MCF 10A (cell line): ENCODE measurements at regions of chr5 and their contacts with region 1.

Region 1: GRCh38 chr5:136062366-136063274 is 33.8 kb downstream of the TGFBI start:
- DNase-seq: peak; percentile 79
- H3K4me3 Mint-ChIP-seq: no peak overlapping the region
- H3K27ac Mint-ChIP-seq: no peak overlapping the region
- H3K4me1 Mint-ChIP-seq: peaks cover 27% of the 10 kb centered on the region
- H3K27me3 Mint-ChIP-seq: no peaks in the 10 kb centered on the region
- CTCF ChIP-seq: peak; percentile 80

Region 2: DNA sequence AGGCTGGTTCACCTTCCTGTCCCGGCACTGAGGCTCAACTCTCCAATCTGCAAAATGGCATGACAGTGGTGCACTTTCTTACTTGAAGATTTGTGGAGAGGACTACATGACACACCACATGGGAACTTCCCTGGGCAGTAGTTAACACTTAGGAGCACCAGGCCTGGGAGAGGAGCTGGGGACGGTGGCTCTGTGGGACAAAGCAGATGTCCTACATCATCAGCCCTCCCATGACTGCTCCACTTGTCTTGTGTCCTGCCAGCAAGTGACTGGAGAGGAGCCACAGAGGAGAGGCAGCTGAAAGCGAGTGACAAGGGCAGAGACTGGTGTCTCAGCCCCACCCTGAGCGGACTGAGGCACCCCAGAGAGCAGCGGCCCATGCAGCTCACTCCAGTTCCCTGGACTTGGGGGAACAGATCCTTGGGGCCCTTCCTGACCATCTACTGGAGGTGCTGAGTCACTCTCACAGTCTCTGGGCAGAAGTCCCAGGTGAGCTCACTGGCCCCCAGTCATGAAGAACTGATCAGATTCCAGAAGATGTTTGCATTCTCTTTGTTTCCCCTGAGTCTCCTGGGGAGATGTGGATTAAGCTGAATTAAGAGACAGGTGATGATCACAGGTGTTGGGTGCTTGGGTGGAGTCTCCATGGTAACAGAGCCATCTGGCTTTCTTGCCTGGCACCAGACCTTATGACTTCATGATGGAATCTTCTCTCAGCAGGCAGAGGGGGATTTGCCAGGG is 241.4 kb before region 1 on chr5:
- CTCF ChIA-PET with region 1: no interaction called
- POLR2A ChIA-PET with region 1: no interaction called
- intact Hi-C with region 1: no loop called
- DNase-seq: peak; percentile 49
- H3K4me3 Mint-ChIP-seq: no peak overlapping the region
- H3K27ac Mint-ChIP-seq: no peak overlapping the region
- H3K4me1 Mint-ChIP-seq: no peaks in the 10 kb centered on the region
- H3K27me3 Mint-ChIP-seq: peaks cover 16% of the 10 kb centered on the region
- CTCF ChIP-seq: no peak

Region 3: DNA sequence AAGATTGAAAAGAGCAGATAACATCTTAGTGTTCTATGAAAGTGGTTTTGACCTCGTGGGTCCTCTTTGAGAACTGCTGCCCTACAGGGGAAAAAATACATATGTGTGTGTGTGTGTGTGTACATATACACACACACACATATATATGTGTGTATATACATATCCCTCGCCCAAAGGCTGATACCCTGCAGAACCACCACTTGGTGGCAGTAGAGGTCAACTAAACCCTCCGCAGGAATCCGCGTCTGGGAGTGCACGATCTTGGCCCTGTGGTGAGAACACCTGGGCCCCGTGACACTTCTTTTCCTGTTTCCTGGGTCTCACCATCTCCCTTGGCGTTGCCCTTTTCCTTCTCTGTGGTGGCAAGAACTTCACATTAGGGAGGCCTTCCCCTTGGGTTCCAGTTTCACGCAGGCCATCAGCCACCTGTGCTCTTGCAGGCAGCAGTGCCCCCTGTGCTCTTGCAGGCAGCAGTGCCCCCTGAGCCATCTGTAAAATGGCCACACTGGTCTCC is 175.2 kb before region 1 on chr5:
- CTCF ChIA-PET with region 1: interaction called, 45 read pairs
- POLR2A ChIA-PET with region 1: interaction called, 5 read pairs
- intact Hi-C with region 1: loop called (anchors 1 kb)
- DNase-seq: peak; percentile 90
- H3K4me3 Mint-ChIP-seq: no peak overlapping the region
- H3K27ac Mint-ChIP-seq: no peak overlapping the region
- H3K4me1 Mint-ChIP-seq: no peaks in the 10 kb centered on the region
- H3K27me3 Mint-ChIP-seq: peaks cover 37% of the 10 kb centered on the region
- CTCF ChIP-seq: peak; percentile 96

Region 4: DNA sequence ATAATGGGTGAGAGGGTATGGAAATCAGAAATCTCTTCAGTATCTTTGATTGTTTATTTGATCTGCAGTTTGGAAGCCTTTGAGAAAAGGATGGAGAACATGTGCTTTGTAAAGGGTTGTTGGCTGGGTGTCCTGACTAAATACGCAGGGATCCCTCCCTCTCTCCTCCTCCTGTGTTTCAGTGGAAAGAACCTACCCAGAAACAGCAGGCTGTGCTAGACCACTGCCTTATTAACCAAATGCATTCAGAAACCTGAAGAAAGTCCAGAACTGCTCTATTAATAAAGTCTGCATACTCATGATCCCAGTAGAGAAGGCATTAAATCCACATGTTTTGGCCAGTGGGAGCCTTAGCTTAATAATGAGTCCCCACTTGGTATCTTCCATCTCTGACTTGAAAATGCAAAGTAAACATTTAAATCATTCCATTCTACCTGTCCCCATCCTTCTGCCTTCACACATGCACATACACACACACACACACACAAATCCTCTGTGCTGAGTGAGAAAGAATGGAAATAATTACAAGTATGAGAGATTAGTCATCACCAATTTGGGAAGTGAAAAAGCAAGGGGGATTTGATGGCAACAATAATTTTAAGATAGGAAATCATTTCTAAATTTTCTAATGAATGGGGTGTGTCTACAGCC is 97.8 kb before region 1 on chr5:
- CTCF ChIA-PET with region 1: interaction called, 4 read pairs
- POLR2A ChIA-PET with region 1: interaction called, 3 read pairs
- intact Hi-C with region 1: loop called (anchors 1 kb)
- DNase-seq: no peak
- H3K4me3 Mint-ChIP-seq: no peak overlapping the region
- H3K27ac Mint-ChIP-seq: no peak overlapping the region
- H3K4me1 Mint-ChIP-seq: peaks cover 7% of the 10 kb centered on the region
- H3K27me3 Mint-ChIP-seq: no peaks in the 10 kb centered on the region
- CTCF ChIP-seq: no peak

Region 5: DNA sequence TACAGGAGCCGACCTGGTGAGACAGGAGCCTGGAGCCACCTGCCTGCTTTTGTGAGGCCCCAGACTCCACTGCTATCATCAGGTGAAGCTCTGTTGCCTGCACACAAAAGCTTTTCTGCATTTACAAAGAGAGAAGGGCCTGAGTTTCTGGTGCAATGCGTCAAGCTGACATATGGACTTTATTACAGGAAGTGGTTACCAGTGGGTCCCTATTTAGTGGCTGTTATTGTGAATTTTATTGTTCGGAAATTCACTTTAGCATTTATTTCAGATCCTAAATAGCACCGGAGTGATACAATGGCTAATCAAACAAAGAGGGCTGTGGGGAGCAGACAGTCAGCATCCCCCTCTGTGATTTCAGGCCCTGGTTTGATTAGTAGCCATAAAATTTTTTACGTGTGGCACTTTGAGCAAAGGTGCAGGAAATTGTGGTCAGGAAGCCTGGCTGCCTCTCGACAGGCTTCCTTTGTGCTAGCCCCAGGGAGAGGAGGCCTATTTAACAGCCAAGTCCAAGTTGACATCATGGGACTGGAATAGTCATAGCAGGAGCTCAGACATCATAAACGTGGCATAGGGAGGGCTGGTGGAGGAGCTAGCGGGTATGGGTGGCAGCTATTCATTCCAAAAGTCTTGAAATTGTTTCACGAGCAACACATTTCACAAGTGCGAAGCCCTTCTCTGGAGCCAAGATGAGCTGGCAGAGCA is 25.5 kb before region 1 on chr5:
- CTCF ChIA-PET with region 1: interaction called, 13 read pairs
- POLR2A ChIA-PET with region 1: interaction called, 364 read pairs
- intact Hi-C with region 1: no loop called
- DNase-seq: peak; percentile 89
- H3K4me3 Mint-ChIP-seq: peak overlapping the region; percentile 48
- H3K27ac Mint-ChIP-seq: peak overlapping the region; percentile 76
- H3K4me1 Mint-ChIP-seq: peaks cover 77% of the 10 kb centered on the region
- H3K27me3 Mint-ChIP-seq: no peaks in the 10 kb centered on the region
- CTCF ChIP-seq: no peak

Region 6: GRCh38 chr5:136073714-136074529 is 11.3 kb after region 1 on chr5:
- CTCF ChIA-PET with region 1: interaction called, 21 read pairs
- POLR2A ChIA-PET with region 1: interaction called, 3 read pairs
- intact Hi-C with region 1: no loop called
- DNase-seq: no peak
- H3K4me3 Mint-ChIP-seq: no peak overlapping the region
- H3K27ac Mint-ChIP-seq: no peak overlapping the region
- H3K4me1 Mint-ChIP-seq: peaks cover 16% of the 10 kb centered on the region
- H3K27me3 Mint-ChIP-seq: no peaks in the 10 kb centered on the region
- CTCF ChIP-seq: no peak